A673 (cell line): ENCODE measurements at regions of chr19 and their contacts with region 1.

Region 1: DNA sequence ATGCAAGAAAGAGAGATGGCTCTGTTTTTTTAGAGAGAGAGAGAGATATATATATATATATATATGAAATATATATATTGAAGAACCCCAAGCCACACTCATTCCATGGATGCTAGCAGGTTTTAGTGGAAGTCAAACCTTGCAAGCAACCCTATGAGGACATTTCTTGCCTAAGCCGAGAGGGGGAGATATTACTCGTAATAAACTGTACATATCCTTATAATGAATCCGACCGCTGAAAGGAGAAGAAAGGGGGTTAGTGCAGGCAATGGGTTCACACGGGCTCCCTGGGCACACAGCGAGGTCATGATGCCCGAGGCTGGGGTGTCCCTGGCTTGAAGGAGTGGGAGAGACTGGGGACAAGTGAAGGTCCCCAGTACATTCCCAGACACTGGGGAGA is 78.3 kb downstream of the IER2 start:
- DNase-seq: peak; percentile 54
- H3K4me3 ChIP-seq: no peak overlapping the region
- H3K27ac ChIP-seq: no peak overlapping the region
- H3K4me1 ChIP-seq: peaks cover 7% of the 10 kb centered on the region
- H3K27me3 ChIP-seq: no peaks in the 10 kb centered on the region
- CTCF ChIP-seq: peak; percentile 43

Region 2: DNA sequence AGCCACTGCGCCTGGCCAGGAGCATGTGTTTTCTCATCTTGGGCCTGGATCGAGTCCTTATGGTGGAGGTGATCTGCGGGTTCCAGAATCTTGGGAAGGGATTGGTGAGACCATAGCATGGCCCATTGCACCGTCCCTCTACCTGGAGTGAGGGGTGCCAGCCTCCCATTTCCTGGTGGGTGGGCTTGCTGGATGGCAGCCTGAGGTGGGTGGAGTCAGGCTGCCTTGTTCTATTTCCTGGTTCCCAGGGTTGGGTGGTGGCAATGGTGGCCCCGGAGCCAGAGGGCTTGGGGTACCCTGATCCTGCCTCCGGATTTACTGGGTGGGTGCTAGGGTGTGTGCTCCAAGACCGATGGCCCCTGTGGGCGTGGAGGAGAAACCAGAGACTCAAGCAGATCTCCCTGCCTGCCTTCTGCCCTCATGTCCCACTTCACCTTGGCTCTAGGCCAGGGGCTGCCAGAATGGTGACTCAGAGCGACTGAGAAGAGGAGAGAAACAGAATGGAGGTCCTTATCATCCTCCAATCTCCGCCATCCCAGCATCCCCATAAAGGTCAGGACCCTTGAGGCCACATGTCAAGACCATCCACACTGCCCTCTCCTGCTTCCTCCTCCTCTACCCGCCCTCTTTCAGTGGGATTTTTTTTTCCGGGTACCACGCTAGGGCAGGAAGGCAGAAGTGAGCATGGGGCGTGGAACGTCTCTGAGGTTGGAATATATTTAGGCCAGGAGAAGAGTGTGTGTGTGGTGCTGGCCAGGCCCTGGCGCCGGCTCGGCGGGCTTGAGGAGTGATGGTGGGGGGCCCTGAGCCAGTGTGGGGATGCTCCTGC is 56.3 kb before region 1 on chr19:
- CTCF ChIA-PET with region 1: no interaction called
- POLR2A ChIA-PET with region 1: no interaction called
- intact Hi-C with region 1: no loop called
- DNase-seq: peak; percentile 84
- H3K4me3 ChIP-seq: no peak overlapping the region
- H3K27ac ChIP-seq: peak overlapping the region; percentile 55
- H3K4me1 ChIP-seq: peaks cover 28% of the 10 kb centered on the region
- H3K27me3 ChIP-seq: no peaks in the 10 kb centered on the region
- CTCF ChIP-seq: no peak

Region 3: GRCh38 chr19:13255041-13255718 is 26.6 kb after region 1 on chr19:
- CTCF ChIA-PET with region 1: interaction called, 14 read pairs
- POLR2A ChIA-PET with region 1: no interaction called
- intact Hi-C with region 1: no loop called
- DNase-seq: no peak
- H3K4me3 ChIP-seq: no peak overlapping the region
- H3K27ac ChIP-seq: no peak overlapping the region
- H3K4me1 ChIP-seq: no peaks in the 10 kb centered on the region
- H3K27me3 ChIP-seq: no peaks in the 10 kb centered on the region
- CTCF ChIP-seq: no peak